PC-3 (cell line): ENCODE measurements at regions of chr1 and their contacts with region 1.

Region 1: DNA sequence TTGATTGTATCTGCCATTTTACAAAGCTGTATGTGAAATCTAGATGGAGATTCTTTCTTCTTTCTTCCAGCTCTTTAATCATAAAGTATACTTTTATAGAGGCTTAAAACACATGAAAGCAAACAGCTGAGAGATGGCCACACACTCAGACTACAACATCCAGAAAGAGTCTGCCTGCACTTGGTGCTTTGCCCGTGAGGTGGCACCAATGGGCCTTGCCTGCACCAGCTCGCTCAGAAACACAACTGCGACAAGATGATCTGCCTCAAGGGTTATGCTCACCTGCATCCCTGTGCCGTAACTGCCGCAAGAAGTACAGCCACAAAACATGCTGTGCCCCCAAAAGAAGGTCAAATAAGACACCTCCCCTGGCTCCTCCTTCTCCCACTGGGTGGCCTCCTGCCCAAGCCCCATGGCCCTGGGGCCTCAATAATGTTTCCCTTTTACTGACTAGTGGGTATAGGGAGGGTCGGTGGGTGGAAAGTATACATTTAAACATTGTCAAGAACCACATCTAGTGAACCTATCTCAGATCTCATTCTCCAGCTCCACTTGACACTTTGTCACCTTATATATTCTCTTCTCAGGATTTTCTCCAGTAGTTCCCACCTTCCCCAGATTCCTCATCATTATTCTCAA is 66.7 kb upstream of the ANGPTL3 start:
- DNase-seq: peak; percentile 64
- ATAC-seq: peak; percentile 100
- H3K4me3 ChIP-seq: no peak overlapping the region
- H3K27ac ChIP-seq: no peak overlapping the region
- H3K4me1 ChIP-seq: no peaks in the 10 kb centered on the region
- H3K27me3 ChIP-seq: no peaks in the 10 kb centered on the region
- CTCF ChIP-seq: peak; percentile 85

Region 2: GRCh38 chr1:62687903-62688686 is 157.5 kb after region 1 on chr1 and contains the start of gene DOCK7:
- CTCF ChIA-PET with region 1: no interaction called
- POLR2A ChIA-PET with region 1: no interaction called
- intact Hi-C with region 1: loop called (anchors 5 kb)
- DNase-seq: peak; percentile 74
- ATAC-seq: peak; percentile 80
- H3K4me3 ChIP-seq: peak within 1 kb of the TSS; percentile 85
- H3K27ac ChIP-seq: 0 out of 2 replicates have a peak within 1 kb of the TSS, but pooled peaks have one; percentile 12
- H3K4me1 ChIP-seq: peaks cover 34% of the 10 kb centered on the region
- H3K27me3 ChIP-seq: no peaks in the 10 kb centered on the region
- CTCF ChIP-seq: no peak
- total RNA-seq, gene DOCK7: 70.1 and 81.4 TPM in 2 replicates